Sigmoid colon (tissue), 7 donors: ENCODE measurements at regions of chr14 and their contacts with region 1.

Region 1: DNA sequence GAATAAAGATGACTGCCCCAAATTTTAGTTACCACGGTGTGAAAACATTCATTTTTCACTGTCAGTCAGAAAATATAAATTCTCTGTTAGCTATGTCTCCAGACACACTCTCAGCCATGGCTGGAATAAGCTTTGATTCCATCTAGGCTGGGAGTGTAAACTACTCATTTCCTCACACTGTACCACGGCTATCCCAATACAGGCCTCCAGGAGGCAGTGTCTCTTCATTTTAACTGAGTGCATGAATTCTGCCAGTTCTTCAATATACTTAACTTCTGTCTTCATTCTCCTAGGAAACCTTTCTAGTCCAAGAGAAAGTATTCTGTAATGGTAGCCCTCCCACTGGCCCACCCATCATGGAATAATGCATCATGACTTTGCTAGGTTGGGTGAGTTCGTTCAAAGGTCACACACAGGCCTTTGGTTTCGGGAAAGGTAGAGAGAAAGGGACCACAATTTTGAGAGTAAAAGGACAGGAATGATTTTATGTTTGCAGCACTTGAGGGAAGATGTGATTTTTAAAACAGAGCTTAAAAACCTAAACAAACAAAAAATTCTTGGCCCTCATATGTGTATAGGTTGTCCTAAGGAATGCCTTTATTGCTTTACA is 381.1 kb downstream of the SEC23A start:
- DNase-seq: no peak
- H3K4me3 ChIP-seq: no peak overlapping the region
- H3K27ac ChIP-seq: no peak overlapping the region
- H3K4me1 ChIP-seq: peaks cover 0 to 4% (median under 1%) of the 10 kb centered on the region in 4 donors
- H3K27me3 ChIP-seq: no peaks in the 10 kb centered on the region
- CTCF ChIP-seq: peak in 3 of 4 experiments; percentile 37 to 58 (median 58)
- EP300 ChIP-seq: no peak
- POLR2A ChIP-seq: no peak

Region 2: GRCh38 chr14:38867561-38868150 is 145.7 kb after region 1 on chr14:
- intact Hi-C with region 1: loop called (anchors 5 kb)
- DNase-seq: peak; percentile 77
- H3K4me3 ChIP-seq: no peak overlapping the region
- H3K27ac ChIP-seq: no peak overlapping the region
- H3K4me1 ChIP-seq: no peaks in the 10 kb centered on the region
- H3K27me3 ChIP-seq: no peaks in the 10 kb centered on the region
- CTCF ChIP-seq: peak in 3 of 4 experiments; percentile 32 to 64 (median 61)
- EP300 ChIP-seq: no peak
- POLR2A ChIP-seq: no peak